HepG2 (cell line): ENCODE measurements at regions of chr16 and their contacts with region 1.

Region 1: DNA sequence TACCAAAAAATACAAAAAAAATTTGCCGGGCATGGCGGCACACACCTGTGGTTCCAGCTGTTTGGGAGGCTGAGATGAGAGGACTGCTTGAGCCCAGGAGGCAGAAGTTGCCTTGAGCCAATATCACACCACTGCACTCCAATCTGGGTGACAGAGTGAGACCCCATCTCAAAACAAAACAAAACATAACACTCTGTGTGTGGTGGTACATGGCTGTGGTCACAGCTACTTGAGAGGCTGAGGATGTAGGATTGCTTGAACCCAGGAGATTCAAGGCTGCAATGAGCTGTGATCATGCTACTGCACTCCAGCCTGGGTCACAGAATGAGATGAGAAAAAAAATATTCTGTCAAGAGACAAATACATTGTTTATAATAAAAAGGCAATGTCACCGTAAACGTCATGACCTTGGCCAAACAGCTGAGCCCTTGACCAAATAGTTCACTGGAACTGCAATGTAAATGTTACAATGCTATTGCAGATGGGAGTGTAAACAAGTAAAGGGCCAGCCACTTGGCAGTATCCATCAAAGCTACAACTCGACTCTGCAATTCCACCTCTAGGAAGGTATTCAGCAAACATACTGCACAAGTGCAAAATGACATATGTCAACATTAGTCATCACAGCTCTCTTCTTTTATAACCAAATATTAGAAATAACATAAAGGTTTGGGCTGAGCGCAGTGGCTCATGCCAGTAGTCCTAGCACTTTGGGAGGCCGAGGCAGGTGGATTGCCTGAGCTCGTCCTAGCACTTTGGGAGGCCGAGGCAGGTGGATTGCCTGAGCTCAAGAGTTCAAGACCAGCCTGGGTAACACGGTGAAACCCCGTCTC is 16.9 kb downstream of the EARS2 start:
- DNase-seq: peak; percentile 99
- ATAC-seq: peak; percentile 95
- H3K4me3 ChIP-seq: no peak overlapping the region
- H3K27ac ChIP-seq: peak overlapping the region; percentile 91
- H3K4me1 ChIP-seq: peaks cover 47% of the 10 kb centered on the region
- H3K27me3 ChIP-seq: no peaks in the 10 kb centered on the region
- CTCF ChIP-seq: peak; percentile 25
- EP300 ChIP-seq: peak; percentile 88 to 96
- POLR2A ChIP-seq: peak in 1 of 2 experiments; percentile 17; a peak in 1 of 4 replicates
- RAD21 ChIP-seq: no peak

Region 2: GRCh38 chr16:23510164-23510914 is 29.9 kb before region 1 on chr16 and contains the start of gene GGA2:
- CTCF ChIA-PET with region 1: no interaction called
- POLR2A ChIA-PET with region 1: interaction called, 24 read pairs
- in situ Hi-C with region 1: no loop called
- intact Hi-C with region 1: loop called (anchors 2 kb)
- DNase-seq: peak; percentile 79
- ATAC-seq: peak; percentile 90
- H3K4me3 ChIP-seq: peak within 1 kb of the TSS; percentile 75 to 92 (median 91)
- H3K27ac ChIP-seq: peak within 1 kb of the TSS; percentile 74
- H3K4me1 ChIP-seq: peaks cover 76% of the 10 kb centered on the region
- H3K27me3 ChIP-seq: no peaks in the 10 kb centered on the region; a peak in 1 of 5 replicates
- CTCF ChIP-seq: peak; percentile 65
- EP300 ChIP-seq: peak in 1 of 2 experiments; percentile 33; a peak in 1 of 4 replicates
- POLR2A ChIP-seq: peak; percentile 95 to 99
- RAD21 ChIP-seq: peak; percentile 94
- total RNA-seq, gene GGA2: 69.8 and 93.1 TPM in 2 replicates

Region 3: GRCh38 chr16:23518435-23518891 is 21.7 kb before region 1 on chr16:
- CTCF ChIA-PET with region 1: no interaction called
- POLR2A ChIA-PET with region 1: interaction called, 18 read pairs
- in situ Hi-C with region 1: no loop called
- intact Hi-C with region 1: no loop called
- DNase-seq: no peak
- ATAC-seq: no peak
- H3K4me3 ChIP-seq: no peak overlapping the region
- H3K27ac ChIP-seq: no peak overlapping the region
- H3K4me1 ChIP-seq: peaks cover 10% of the 10 kb centered on the region
- H3K27me3 ChIP-seq: no peaks in the 10 kb centered on the region
- CTCF ChIP-seq: no peak
- EP300 ChIP-seq: no peak
- POLR2A ChIP-seq: no peak
- RAD21 ChIP-seq: no peak

Region 4: DNA sequence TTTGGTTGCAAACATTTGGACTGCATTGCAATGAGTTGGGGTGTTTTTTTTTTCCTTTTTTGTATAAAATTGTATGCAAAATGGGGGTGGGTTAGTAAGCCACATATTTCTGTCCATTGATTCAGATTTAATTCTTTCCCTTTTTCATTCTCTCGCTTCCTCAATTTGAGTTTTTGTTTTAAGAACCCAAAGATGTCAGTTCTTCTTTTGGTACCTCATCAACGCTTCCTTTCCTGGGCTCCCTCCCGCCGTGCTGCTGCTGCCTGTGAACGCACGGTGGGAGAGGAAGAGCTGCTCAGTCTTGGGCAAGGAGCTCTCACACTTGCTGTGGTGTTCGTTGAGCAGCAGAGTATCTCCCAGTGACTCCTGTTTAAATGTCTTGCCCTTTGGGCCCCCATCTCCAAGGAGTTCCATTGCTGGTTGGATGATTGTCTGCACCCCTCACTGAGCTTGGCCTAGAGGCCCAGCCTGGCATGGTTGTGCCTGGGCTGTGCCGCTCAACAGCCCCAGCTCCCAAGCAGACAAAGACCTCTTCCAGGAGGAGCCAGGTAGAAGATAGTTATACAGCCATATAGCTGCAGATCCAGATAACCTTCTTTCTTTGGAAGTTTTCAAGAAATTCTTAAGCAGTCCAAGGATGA is 30.9 kb after region 1 on chr16:
- CTCF ChIA-PET with region 1: no interaction called
- POLR2A ChIA-PET with region 1: no interaction called
- in situ Hi-C with region 1: no loop called
- intact Hi-C with region 1: no loop called
- DNase-seq: no peak
- ATAC-seq: no peak
- H3K4me3 ChIP-seq: no peak overlapping the region
- H3K27ac ChIP-seq: no peak overlapping the region
- H3K4me1 ChIP-seq: no peaks in the 10 kb centered on the region
- H3K27me3 ChIP-seq: no peaks in the 10 kb centered on the region
- CTCF ChIP-seq: no peak
- EP300 ChIP-seq: no peak
- POLR2A ChIP-seq: no peak
- RAD21 ChIP-seq: no peak

Region 5: DNA sequence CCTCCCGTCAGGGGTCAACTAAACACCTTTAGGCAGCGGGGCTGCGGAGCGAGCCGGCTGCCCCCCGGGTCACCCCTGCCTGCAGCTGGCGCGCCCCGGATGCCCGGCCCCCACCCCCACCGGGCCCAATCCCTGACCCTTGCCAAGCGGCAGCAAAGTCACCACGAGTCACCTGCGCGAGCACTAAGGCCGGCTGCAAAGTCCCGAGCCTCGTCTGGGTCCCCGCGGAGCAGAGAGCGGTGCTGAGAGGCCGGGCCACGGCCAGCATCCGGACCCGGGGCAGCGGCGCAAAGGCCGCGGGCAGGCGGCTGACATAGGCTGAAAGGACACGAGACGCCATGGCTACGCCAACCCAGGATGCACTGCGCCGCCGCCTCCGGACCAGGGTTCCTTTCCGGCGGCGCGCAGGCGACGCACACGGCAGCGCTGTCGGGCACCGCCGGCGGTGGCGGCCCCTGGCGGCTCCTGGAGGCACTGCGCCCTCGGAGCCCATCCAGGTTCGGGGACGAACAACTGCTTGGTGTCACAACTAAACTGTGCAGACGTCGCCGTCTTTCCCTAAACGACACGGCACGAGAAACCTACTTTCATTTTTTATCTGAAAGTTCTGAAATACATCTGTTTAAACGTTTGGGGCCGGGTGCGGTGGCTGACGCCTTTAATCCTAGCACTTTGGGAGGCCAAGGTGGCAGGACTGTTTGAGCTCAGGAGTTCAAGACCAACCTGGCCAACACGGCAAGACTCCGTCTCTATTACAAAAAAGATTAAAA is 55.9 kb after region 1 on chr16 and contains the start of gene NDUFAB1:
- CTCF ChIA-PET with region 1: no interaction called
- POLR2A ChIA-PET with region 1: interaction called, 14 read pairs
- in situ Hi-C with region 1: no loop called
- intact Hi-C with region 1: no loop called
- DNase-seq: peak; percentile 91
- ATAC-seq: peak; percentile 96
- H3K4me3 ChIP-seq: peak within 1 kb of the TSS; percentile 72 to 98 (median 97)
- H3K27ac ChIP-seq: peak within 1 kb of the TSS; percentile 80
- H3K4me1 ChIP-seq: peaks cover 31% of the 10 kb centered on the region
- H3K27me3 ChIP-seq: peaks cover 0 to 5% of the 10 kb centered on the region in 2 experiments; a peak in 1 of 5 replicates
- CTCF ChIP-seq: peak; percentile 96
- EP300 ChIP-seq: peak in 1 of 2 experiments; percentile 58; a peak in 1 of 4 replicates
- POLR2A ChIP-seq: peak; percentile 93 to 97
- RAD21 ChIP-seq: peak; percentile 87
- total RNA-seq, gene NDUFAB1: 601 and 760 TPM in 2 replicates